ENCODE measurements at regions of chr17 and their contacts with region 1.

Region 1: GRCh38 chr17:75456417-75457046 is at the start of gene TMEM94:
- DNase-seq: peak; percentile 95
- ATAC-seq: peak; percentile 99
- H3K4me3 Mint-ChIP-seq: peak within 1 kb of the TSS; percentile 89
- H3K27ac Mint-ChIP-seq: peak within 1 kb of the TSS; percentile 92
- H3K4me1 Mint-ChIP-seq: peaks cover 24% of the 10 kb centered on the region
- H3K27me3 Mint-ChIP-seq: no peaks in the 10 kb centered on the region
- total RNA-seq, gene TMEM94: 51.4 to 62.5 TPM

Region 2: DNA sequence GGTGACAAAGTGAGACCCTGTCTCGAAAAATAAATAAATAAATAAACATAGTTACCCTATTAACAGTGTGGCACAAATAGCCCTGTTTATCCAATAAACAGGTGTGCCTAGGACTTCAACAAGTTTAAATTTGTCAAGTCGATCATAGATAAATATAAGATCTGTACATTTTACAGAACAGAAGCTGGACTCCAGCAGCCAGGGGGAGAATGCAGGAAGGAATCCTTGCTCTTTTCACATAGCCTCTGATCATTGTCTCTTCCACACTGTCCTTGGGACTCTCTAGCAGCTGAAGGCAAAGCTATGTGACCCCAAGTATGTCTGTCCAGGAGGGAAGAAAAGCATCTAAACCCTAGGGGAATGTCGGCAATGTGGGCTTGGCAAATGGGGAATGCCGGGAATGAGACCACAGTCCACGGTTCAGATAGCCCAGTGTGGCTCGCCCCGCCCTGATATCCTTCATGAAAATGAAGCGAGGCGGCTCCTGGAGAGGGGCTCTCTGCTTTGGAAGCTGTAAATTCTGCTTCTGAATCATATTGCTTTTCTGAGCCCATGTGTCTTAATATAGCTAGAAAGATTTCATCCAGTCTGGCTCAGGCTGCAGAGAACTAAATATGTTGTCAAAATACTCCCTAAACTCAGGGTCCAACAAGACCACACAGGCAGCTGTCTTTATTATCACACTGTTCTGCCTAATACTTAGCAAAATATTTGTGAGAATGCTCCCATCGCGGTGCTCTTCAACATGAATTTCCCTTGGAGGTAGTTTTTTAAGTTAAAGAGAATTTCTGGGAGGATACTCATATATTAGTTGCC is 26.2 kb before region 1 on chr17:
- CTCF ChIA-PET with region 1: interaction called, 4 read pairs
- POLR2A ChIA-PET with region 1: no interaction called
- intact Hi-C with region 1: loop called in 1 of 2 experiments (anchors 5 kb)
- DNase-seq: no peak
- ATAC-seq: no peak
- H3K4me3 Mint-ChIP-seq: no peak overlapping the region
- H3K27ac Mint-ChIP-seq: no peak overlapping the region
- H3K4me1 Mint-ChIP-seq: peaks cover 16% of the 10 kb centered on the region
- H3K27me3 Mint-ChIP-seq: peaks cover 5% of the 10 kb centered on the region

Region 3: GRCh38 chr17:75504347-75504964 is 47.9 kb after region 1 on chr17:
- CTCF ChIA-PET with region 1: no interaction called
- POLR2A ChIA-PET with region 1: no interaction called
- intact Hi-C with region 1: no loop called
- DNase-seq: peak; percentile 63
- ATAC-seq: peak; percentile 68
- H3K4me3 Mint-ChIP-seq: no peak overlapping the region
- H3K27ac Mint-ChIP-seq: no peak overlapping the region
- H3K4me1 Mint-ChIP-seq: no peaks in the 10 kb centered on the region
- H3K27me3 Mint-ChIP-seq: no peaks in the 10 kb centered on the region

Region 4: DNA sequence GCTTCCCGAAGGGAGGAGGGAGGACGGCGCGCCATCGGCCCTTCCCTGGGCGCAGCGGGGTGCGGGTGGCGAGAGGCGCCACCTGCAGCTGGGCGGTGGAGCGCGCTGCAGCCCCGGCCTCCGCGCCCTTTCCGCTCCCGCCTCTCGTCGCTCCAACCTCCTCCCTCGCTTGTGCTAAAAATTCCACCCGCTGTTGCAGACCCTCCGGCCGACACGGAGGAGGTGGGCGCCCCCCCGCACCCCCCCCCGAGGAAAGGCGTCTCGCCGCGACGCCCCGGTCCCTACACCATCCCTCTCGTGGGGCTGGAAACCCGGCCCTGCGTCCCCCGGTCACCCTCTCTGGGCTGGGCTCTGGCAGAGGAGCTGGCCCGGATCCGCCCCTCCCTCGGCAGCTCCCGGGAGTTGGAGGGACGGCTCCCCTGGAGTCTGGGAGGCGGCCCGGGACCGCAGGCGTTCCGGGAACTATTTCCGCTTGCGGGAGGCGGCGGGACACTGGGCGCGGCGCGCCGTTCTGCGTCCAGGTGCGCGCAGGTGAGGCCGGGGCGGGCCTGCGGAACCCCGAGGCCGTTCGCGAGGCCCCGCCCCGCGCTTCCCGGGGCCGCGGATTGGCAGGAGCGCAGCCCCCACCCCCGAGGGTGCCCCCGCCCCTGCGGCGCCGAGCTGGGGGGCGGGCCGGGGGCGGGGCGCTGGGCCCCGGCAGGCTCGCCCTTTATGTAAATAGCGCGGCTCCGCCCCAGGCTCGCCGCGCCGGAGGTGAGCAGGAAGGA is 68.6 kb after region 1 on chr17 and contains the start of gene LLGL2:
- CTCF ChIA-PET with region 1: interaction called, 3 read pairs
- POLR2A ChIA-PET with region 1: interaction called, 3 read pairs
- intact Hi-C with region 1: loop called in 1 of 2 experiments (anchors 1 kb)
- DNase-seq: peak; percentile 88
- ATAC-seq: peak; percentile 89
- H3K4me3 Mint-ChIP-seq: peak within 1 kb of the TSS; percentile 62
- H3K27ac Mint-ChIP-seq: no peak within 1 kb of the TSS
- H3K4me1 Mint-ChIP-seq: peaks cover 10% of the 10 kb centered on the region
- H3K27me3 Mint-ChIP-seq: no peaks in the 10 kb centered on the region
- total RNA-seq, gene LLGL2: 7.1 to 9.6 TPM

Region 5: DNA sequence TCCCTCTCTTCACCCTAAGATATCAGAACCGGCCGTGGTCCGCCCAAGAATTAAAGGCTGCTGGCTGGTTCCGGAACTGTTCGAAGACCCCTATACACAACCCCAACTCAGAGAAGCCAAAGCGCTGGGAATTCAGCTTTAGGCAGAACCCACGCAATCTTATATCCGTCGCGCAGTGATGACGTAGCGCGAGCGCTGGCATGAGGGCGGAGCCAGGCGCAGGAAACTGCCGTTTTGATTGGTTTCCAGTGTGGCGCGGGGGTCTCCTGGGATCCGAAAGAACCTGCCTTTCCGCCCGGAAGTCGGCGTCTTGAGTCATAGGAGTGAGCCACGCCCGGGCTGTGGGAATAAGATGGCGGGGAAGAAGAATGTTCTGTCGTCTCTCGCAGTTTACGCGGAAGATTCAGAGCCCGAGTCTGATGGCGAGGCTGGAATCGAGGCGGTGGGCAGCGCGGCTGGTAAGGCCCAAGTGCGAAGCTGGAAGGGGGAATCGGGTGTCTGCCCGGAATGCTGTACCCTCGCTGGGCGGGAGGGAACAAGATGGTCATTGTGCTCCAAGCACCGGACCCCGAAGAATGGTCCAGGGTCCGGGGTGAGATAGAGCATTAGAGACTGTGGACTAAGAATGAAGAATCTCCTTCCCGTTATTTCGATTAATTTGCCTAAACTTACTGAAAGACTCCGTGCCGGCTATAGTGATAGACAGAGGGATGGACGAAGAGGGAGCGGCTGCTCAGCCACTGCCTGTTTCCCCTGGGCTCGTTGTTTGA is 210.7 kb after region 1 on chr17 and contains the starts of genes RECQL5 and SAP30BP:
- CTCF ChIA-PET with region 1: no interaction called
- POLR2A ChIA-PET with region 1: no interaction called
- intact Hi-C with region 1: loop called in 1 of 2 experiments (anchors 1 kb)
- DNase-seq: peak; percentile 99
- ATAC-seq: peak; percentile 100
- H3K4me3 Mint-ChIP-seq: no peak within 1 kb of the TSS
- H3K27ac Mint-ChIP-seq: no peak within 1 kb of the TSS
- H3K4me1 Mint-ChIP-seq: peaks cover 34% of the 10 kb centered on the region
- H3K27me3 Mint-ChIP-seq: no peaks in the 10 kb centered on the region
- total RNA-seq, gene RECQL5: 36.4 to 40.5 TPM
- total RNA-seq, gene SAP30BP: 87.8 to 100.0 TPM

Region 6: DNA sequence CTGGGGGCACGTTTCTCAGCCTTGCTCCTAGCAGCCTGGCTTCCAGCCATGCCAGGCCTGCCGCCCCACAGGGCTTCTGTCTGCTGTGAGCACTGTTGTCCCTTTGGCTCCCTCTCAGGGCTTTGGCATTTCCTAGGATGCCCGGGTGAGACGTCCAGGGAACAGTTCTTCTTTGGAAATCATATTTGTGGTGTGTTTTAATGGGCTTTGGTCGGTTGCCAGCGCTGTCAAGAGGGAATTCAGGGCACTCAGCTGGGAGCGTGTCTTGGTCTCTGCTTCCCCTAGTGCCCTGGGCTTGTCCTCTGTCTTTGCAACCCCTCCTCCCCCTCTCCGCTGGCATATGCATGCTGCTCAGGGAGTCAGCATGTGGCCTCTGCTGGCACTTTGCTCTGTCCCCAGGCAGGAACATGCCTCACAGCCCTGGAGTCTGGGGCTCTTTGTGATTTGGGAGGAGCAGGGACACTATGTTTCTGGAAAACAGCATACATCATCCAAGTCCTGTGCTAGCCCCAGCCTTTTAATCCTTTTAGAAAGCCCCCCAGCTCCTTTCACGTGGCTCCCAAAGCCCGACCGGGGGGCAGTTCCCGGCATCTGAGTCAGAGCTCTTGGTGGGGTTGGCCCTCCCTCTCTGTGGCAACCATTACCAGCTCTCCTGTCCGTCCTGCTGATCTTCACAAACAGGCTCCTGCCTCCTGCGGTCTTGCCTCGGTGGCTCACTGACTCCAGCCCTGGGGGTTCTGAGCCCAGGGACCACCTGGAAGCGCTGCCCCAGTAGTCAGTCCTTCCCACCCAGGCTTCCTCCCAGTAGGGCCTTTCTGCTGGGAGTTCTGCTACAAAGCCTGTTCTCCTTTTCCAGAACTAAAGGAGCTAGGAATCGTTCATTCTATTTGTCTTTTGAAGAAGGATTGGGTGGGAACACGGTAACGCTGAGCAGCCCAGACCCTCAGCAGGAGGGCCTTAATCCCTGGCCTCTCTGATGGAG is 237.3 kb after region 1 on chr17:
- CTCF ChIA-PET with region 1: no interaction called
- POLR2A ChIA-PET with region 1: no interaction called
- intact Hi-C with region 1: no loop called
- DNase-seq: no peak
- ATAC-seq: no peak
- H3K4me3 Mint-ChIP-seq: no peak overlapping the region
- H3K27ac Mint-ChIP-seq: no peak overlapping the region
- H3K4me1 Mint-ChIP-seq: peaks cover 35% of the 10 kb centered on the region
- H3K27me3 Mint-ChIP-seq: no peaks in the 10 kb centered on the region

Region 7: DNA sequence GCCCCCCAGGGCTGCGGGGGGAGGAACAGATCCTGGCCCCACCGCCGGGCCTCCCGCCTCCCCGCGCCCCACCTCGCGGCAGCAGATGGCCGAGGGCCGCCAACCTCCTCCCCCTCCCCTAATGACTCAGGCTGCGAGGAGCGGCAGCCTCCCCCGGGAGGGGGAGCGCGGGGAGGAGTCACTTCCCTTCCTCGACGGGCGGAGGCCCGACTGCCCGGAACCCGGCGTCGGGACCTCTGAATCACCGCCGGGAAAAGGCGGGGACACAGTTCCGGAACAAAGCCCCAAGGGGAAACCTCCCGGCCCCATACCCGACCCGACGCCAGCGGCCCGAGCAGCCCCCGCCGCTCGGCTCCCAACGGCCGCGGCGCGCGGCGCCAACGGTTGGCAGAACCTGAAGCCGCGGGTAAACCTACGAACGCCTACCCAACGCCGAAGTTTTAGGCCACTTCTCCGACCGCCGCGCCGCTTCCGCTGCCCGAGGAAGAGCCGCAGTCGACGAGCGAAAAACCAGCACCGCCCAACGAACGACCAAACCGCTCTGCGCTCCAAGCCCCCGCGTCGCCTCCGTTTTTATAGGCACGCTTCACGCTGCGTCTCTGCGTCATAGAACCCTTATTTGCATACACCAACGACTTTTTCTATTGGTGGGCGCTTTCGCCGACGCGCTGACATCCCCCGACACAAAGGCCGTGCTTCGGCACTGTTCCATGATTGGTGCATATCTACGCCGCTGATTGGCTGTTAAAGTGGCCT is 322.9 kb after region 1 on chr17:
- CTCF ChIA-PET with region 1: no interaction called
- POLR2A ChIA-PET with region 1: interaction called, 4 read pairs
- intact Hi-C with region 1: loop called in 1 of 2 experiments (anchors 1 kb)
- DNase-seq: peak; percentile 96
- ATAC-seq: peak; percentile 69
- H3K4me3 Mint-ChIP-seq: peak overlapping the region; percentile 98
- H3K27ac Mint-ChIP-seq: peak overlapping the region; percentile 99
- H3K4me1 Mint-ChIP-seq: peaks cover 46% of the 10 kb centered on the region
- H3K27me3 Mint-ChIP-seq: peaks cover 1% of the 10 kb centered on the region

Region 8: GRCh38 chr17:75834944-75835670 is 378.6 kb after region 1 on chr17:
- CTCF ChIA-PET with region 1: no interaction called
- POLR2A ChIA-PET with region 1: no interaction called
- intact Hi-C with region 1: no loop called
- DNase-seq: no peak
- ATAC-seq: no peak
- H3K4me3 Mint-ChIP-seq: no peak overlapping the region
- H3K27ac Mint-ChIP-seq: no peak overlapping the region
- H3K4me1 Mint-ChIP-seq: peaks cover 28% of the 10 kb centered on the region
- H3K27me3 Mint-ChIP-seq: no peaks in the 10 kb centered on the region

Measured in activated CD4-positive, alpha-beta T cell treated with anti-CD3 and anti-CD28 coated beads for 36 hours (primary cell).